Heart left ventricle (tissue), 16 donors: ENCODE measurements at regions of chr22 and their contacts with region 1.

Region 1: DNA sequence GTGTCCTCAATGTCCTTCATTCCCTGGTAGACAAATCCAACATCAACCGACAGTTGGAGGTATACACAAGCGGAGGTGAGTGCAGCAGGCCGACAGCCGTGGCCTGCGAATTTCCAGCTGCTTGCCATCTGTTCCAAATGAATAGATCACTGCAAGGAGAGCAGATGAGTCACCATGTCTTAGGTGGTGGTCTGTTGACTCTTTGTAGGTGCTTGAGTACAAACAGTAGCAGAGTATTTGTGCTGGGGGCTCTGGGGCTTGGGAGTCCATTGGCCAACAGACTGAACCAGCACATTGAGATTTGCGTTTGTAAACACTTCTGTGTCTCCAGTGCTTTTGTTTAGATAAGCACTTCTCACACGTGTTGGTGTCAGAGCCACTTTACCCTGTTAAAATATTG is 21.1 kb downstream of the EIF3L start:
- DNase-seq: no peak
- ATAC-seq: no peak
- H3K4me3 ChIP-seq: no peak overlapping the region
- H3K27ac ChIP-seq: no peak overlapping the region
- H3K4me1 ChIP-seq: no peaks in the 10 kb centered on the region
- H3K27me3 ChIP-seq: no peaks in the 10 kb centered on the region
- CTCF ChIP-seq: no peak
- POLR2A ChIP-seq: no peak

Region 2: GRCh38 chr22:37823134-37823985 is 46.9 kb before region 1 on chr22 and contains the start of gene GALR3:
- intact Hi-C with region 1: no loop called
- DNase-seq: no peak
- ATAC-seq: no peak
- H3K4me3 ChIP-seq: peak within 1 kb of the TSS in 1 of 12 donors; percentile 51
- H3K27ac ChIP-seq: no peak within 1 kb of the TSS
- H3K4me1 ChIP-seq: peaks cover 0 to 31% (median 11%) of the 10 kb centered on the region in 12 donors
- H3K27me3 ChIP-seq: peaks cover 0 to 32% (median 5%) of the 10 kb centered on the region in 9 donors
- CTCF ChIP-seq: no peak
- POLR2A ChIP-seq: no peak
- total RNA-seq, gene GALR3: not detected

Region 3: GRCh38 chr22:37965940-37966664 is 95.8 kb after region 1 on chr22:
- intact Hi-C with region 1: loop called in 1 of 10 experiments (anchors 10 kb)
- DNase-seq: no peak
- ATAC-seq: peak; percentile 28 to 77 (median 43)
- H3K4me3 ChIP-seq: no peak overlapping the region
- H3K27ac ChIP-seq: peak overlapping the region in 8 of 12 donors; percentile 8 to 63 (median 30)
- H3K4me1 ChIP-seq: peaks cover 0 to 22% (median 11%) of the 10 kb centered on the region in 12 donors
- H3K27me3 ChIP-seq: no peaks in the 10 kb centered on the region
- CTCF ChIP-seq: no peak
- POLR2A ChIP-seq: no peak